HCT116 (cell line): ENCODE measurements at regions of chr6 and their contacts with region 1.

Region 1: DNA sequence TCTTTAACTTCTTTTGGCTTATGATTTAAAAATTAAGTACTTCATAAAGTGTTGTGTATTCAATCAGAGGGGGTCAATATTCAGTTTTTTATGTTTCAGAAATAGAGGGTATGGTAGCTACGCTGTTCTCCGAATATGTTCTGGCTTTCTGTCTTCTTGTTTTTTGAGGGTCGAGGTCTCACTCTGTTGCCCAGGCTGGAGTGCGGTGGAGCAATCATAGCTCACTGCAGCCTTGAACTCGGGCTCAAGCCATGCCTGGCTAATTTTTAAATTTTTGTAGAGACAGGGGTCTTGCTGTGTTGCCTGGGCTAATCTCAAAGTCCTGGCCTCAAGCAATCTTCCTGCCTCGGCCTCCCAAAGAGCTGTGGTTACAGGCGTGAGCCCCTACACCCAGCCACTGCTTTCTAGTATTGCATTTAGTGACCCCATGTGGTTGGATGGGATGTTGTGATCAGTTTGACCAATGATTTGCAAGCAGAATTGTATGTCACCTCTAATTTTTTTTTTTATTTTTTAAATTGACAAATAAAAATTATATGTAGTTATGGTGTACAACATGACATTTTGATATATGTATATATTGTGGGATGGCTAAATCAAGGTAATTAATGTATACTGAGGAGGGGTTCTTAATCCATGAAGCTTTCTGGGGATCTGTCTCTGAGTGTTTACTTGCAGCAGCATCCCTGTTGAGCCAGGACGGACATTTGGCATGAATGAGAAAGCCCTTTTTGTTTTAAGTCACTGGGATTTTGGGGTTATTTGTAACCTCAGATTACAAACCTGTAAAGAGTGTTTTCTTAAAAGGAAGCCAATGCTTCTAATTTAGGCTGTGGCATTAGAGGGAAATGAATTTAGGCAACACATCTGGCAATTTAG is 38.5 kb upstream of the DEK start:
- DNase-seq: no peak
- ATAC-seq: peak; percentile 77
- H3K4me3 ChIP-seq: no peak overlapping the region
- H3K27ac ChIP-seq: no peak overlapping the region
- H3K4me1 ChIP-seq: no peaks in the 10 kb centered on the region
- H3K27me3 ChIP-seq: no peaks in the 10 kb centered on the region
- CTCF ChIP-seq: peak in 1 of 3 experiments; percentile 24; a peak in 1 of 6 replicates
- POLR2A ChIP-seq: no peak
- RAD21 ChIP-seq: peak; percentile 56

Region 2: DNA sequence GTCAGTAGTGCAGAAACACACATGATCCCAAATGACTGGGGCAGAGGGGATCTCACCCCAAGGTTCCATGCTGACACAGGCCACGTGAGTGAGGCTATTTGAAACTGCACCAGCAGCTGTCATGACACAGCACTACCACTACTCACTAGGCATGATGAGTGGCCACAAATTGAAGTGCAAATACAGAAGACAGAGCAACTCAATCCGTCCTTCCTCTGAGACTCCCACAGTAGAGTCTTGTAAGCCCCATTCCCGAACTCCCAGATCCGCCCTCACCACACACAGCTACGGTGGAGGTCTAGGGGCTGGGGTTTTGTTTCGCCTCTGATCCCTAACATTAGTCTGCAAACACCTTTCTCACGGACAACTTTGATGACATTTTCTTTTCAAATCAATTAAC is 482.7 kb before region 1 on chr6:
- CTCF ChIA-PET with region 1: no interaction called
- POLR2A ChIA-PET with region 1: no interaction called
- RAD21 ChIA-PET with region 1: no interaction called
- intact Hi-C with region 1: loop called (anchors 10 kb)
- DNase-seq: no peak
- ATAC-seq: peak; percentile 44; the same call in 1 of the 2 replicates
- H3K4me3 ChIP-seq: no peak overlapping the region
- H3K27ac ChIP-seq: no peak overlapping the region
- H3K4me1 ChIP-seq: peaks cover 4 to 5% of the 10 kb centered on the region in 2 experiments; a peak in 2 of 4 replicates
- H3K27me3 ChIP-seq: no peaks in the 10 kb centered on the region
- CTCF ChIP-seq: 0 out of 6 replicates have a peak, but pooled peaks of 2 of the 3 experiments have one; percentile 5 to 9
- POLR2A ChIP-seq: no peak
- RAD21 ChIP-seq: no peak

Region 3: DNA sequence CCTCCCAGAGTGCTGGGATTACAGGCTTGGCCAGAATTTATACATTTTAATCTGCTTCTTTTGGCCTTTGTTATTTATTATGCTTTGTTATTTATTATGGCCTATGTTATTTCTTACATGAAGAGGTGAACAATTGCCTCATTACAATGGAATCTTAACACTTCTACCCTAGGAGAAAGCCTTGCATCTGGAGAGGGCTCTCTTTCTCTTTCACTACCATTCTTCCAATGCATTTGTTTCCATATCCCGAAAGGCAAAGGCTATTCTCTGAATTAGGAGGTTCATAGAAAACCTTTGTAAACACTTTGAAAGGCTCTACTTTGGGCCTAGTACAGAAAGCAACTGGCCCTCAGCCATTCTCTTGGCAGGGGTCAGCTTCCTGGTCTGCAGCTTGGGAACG is 18.5 kb before region 1 on chr6:
- CTCF ChIA-PET with region 1: no interaction called
- POLR2A ChIA-PET with region 1: no interaction called
- RAD21 ChIA-PET with region 1: no interaction called
- intact Hi-C with region 1: loop called (anchors 1 kb)
- DNase-seq: no peak
- ATAC-seq: no peak
- H3K4me3 ChIP-seq: no peak overlapping the region
- H3K27ac ChIP-seq: no peak overlapping the region
- H3K4me1 ChIP-seq: no peaks in the 10 kb centered on the region
- H3K27me3 ChIP-seq: no peaks in the 10 kb centered on the region
- CTCF ChIP-seq: no peak
- POLR2A ChIP-seq: no peak
- RAD21 ChIP-seq: no peak